ENCODE measurements at regions of chr3 and their contacts with region 1.

Region 1: DNA sequence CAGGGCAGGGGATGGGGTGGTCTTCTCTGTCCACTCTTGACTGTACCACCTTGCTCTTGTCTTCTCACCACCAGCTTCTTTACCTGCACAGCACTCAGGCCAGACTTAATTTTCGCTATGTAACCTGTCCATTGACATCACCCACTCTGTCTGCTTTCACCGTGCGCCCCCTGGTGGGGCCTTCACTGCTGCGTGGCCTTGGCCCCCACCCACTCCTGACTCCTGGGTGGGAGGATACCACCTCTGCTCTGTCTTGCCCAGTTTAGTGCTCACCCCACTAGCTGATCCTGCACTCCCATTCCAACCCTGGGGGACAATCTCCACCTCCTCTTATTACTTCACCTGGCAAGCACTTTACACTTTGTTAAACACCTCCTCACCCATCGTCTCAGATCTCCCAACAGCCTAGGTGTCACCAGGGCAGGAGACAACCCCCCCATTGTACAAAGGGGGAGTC is 17.7 kb downstream of the PTH1R start:
- DNase-seq: peak; percentile 34
- ATAC-seq: peak; percentile 87
- H3K4me3 ChIP-seq: no peak overlapping the region
- H3K27ac ChIP-seq: no peak overlapping the region
- H3K4me1 ChIP-seq: no peaks in the 10 kb centered on the region; the same call in 1 of the 2 replicates
- H3K27me3 ChIP-seq: peaks cover 2 to 3% of the 10 kb centered on the region in 2 experiments; a peak in 3 of 4 replicates
- CTCF ChIP-seq: peak; percentile 92 to 93 (median 92); a peak in 5 of 6 replicates
- EP300 ChIP-seq: no peak
- POLR2A ChIP-seq: no peak
- RAD21 ChIP-seq: peak; percentile 79

Region 2: DNA sequence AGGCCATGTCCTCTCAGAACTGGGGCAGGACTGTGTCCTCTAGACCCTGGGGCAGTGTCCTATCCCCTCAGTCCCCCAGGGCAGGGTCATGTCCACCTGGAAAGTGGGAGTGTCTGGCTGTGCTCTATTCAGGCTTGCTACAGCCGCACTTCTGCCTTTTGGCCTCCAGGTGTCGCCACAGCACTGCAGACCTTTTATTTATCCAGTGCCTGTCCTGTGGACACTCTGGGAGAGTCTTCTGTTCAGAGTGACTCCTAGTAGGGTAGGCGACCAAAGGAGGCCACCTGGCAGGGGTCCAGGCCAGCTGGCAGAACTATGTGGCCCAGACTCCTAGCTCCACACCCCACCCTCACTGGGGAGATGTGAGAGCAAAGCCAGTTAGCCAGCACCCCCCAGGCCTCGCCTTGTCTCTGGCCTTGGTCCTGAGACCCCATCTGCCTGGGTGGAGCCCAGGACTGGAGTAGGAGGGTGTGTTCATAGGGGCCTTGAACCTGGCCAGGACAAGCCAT is 190.2 kb before region 1 on chr3:
- CTCF ChIA-PET with region 1: interaction called, 15 read pairs
- POLR2A ChIA-PET with region 1: interaction called, 4 read pairs
- RAD21 ChIA-PET with region 1: interaction called, 9 read pairs
- SMC1A ChIA-PET with region 1: interaction called, 4 read pairs
- in situ Hi-C with region 1: loop called (anchors 5 kb)
- intact Hi-C with region 1: loop called (anchors 1 kb)
- DNase-seq: peak; percentile 19
- ATAC-seq: peak; percentile 96
- H3K4me3 ChIP-seq: no peak overlapping the region
- H3K27ac ChIP-seq: no peak overlapping the region
- H3K4me1 ChIP-seq: no peaks in the 10 kb centered on the region
- H3K27me3 ChIP-seq: peaks cover 2 to 7% of the 10 kb centered on the region in 2 experiments; a peak in 2 of 4 replicates
- CTCF ChIP-seq: peak; percentile 93 to 98 (median 95); a peak in 5 of 6 replicates
- EP300 ChIP-seq: no peak
- POLR2A ChIP-seq: no peak
- RAD21 ChIP-seq: peak; percentile 95

Region 3: DNA sequence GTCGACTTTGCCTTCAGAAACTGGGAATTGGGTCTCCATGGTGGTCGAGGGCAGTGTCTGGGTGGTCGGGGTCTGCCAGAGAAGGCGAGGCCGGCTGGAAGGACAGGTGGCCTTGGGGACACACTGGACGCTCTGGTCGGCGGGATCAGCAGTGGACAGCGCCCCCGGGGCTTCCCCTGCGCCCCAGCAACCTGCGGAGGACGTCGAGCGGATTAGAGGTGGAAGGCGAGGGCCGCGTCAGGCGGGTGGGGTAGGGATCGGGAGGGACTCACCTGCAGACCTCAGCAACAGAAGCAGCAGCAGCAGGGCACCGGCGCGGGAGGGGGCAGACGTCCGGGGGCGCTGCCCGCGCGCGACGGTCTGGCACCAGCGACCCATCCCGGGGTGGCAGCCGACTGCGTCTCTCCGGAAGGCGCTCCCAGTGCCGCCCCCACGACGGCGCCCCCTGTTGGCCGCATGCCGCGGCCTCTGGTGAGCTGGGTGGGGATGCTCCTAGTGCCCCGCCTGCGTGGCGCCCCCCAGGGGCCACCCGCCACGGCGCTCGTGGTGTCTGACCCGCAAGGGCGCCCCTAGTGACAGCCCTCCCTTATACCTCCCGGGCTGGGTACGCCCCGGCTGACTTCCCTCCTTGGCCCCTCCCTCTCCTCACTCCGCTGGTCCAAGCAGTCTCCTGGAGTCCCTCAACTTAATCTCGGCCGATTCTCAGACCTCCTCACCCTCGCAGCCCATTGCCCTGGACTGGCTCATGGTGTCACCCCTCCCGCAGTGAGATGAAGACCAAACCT is 177.6 kb before region 1 on chr3 and contains the start of gene PRSS50:
- CTCF ChIA-PET with region 1: no interaction called
- POLR2A ChIA-PET with region 1: no interaction called
- RAD21 ChIA-PET with region 1: no interaction called
- SMC1A ChIA-PET with region 1: no interaction called
- in situ Hi-C with region 1: loop called (anchors 5 kb)
- intact Hi-C with region 1: no loop called
- DNase-seq: no peak
- ATAC-seq: no peak
- H3K4me3 ChIP-seq: no peak within 1 kb of the TSS
- H3K27ac ChIP-seq: no peak within 1 kb of the TSS
- H3K4me1 ChIP-seq: peaks cover 13% of the 10 kb centered on the region
- H3K27me3 ChIP-seq: no peaks in the 10 kb centered on the region
- CTCF ChIP-seq: peak in 1 of 3 experiments; percentile 42; a peak in 2 of 6 replicates
- EP300 ChIP-seq: no peak
- POLR2A ChIP-seq: no peak
- RAD21 ChIP-seq: no peak
- polyA plus RNA-seq, gene PRSS50: not detected

Region 4: GRCh38 chr3:46878789-46879436 is 16.3 kb before region 1 on chr3:
- CTCF ChIA-PET with region 1: interaction called, 13 read pairs
- POLR2A ChIA-PET with region 1: no interaction called
- RAD21 ChIA-PET with region 1: interaction called, 6 read pairs
- SMC1A ChIA-PET with region 1: interaction called, 4 read pairs
- in situ Hi-C with region 1: no loop called
- intact Hi-C with region 1: no loop called
- DNase-seq: peak; percentile 24
- ATAC-seq: peak; percentile 56
- H3K4me3 ChIP-seq: no peak overlapping the region
- H3K27ac ChIP-seq: no peak overlapping the region
- H3K4me1 ChIP-seq: peaks cover 2% of the 10 kb centered on the region
- H3K27me3 ChIP-seq: peaks cover 7 to 8% of the 10 kb centered on the region in 2 experiments
- CTCF ChIP-seq: no peak
- EP300 ChIP-seq: no peak
- POLR2A ChIP-seq: no peak
- RAD21 ChIP-seq: no peak

Region 5: DNA sequence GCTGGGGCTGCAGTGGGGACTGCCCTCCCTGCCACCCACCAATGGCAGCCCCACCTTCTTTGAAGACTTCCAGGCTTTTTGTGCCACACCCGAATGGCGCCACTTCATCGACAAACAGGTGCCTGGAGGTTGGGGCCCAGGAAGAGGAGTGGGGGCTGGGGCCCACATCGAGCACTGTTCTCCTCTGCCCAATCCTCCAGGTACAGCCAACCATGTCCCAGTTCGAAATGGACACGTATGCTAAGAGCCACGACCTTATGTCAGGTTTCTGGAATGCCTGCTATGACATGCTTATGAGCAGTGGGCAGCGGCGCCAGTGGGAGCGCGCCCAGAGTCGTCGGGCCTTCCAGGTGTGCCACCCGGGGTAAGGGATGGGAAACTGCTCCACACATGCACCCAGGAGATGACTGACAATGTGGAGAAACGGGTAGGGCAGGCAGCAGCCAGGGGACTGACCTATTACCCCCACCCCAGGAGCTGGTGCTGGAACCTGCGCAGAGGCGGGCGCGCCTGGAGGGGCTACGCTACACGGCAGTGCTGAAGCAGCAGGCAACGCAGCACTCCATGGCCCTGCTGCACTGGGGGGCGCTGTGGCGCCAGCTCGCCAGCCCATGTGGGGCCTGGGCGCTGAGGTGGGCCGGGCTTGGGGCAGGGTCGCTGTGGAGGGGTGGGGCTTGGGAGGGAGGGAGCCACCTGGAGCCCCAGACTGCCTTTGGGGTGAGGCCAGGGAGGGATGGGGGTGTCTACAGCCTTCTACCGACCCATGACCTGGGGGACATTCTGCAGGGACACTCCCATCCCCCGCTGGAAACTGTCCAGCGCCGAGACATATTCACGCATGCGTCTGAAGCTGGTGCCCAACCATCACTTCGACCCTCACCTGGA is 107.2 kb after region 1 on chr3:
- CTCF ChIA-PET with region 1: no interaction called
- POLR2A ChIA-PET with region 1: no interaction called
- RAD21 ChIA-PET with region 1: no interaction called
- SMC1A ChIA-PET with region 1: no interaction called
- in situ Hi-C with region 1: no loop called
- intact Hi-C with region 1: no loop called
- DNase-seq: no peak
- ATAC-seq: no peak
- H3K4me3 ChIP-seq: no peak overlapping the region
- H3K27ac ChIP-seq: no peak overlapping the region
- H3K4me1 ChIP-seq: no peaks in the 10 kb centered on the region
- H3K27me3 ChIP-seq: no peaks in the 10 kb centered on the region
- CTCF ChIP-seq: no peak; a peak in 1 of 6 replicates
- EP300 ChIP-seq: no peak
- POLR2A ChIP-seq: no peak; the same call in 1 of the 2 replicates
- RAD21 ChIP-seq: peak; percentile 14; the same call in 1 of the 2 replicates